WTC11 (cell line): ENCODE measurements at regions of chrX and their contacts with region 1.

Region 1: DNA sequence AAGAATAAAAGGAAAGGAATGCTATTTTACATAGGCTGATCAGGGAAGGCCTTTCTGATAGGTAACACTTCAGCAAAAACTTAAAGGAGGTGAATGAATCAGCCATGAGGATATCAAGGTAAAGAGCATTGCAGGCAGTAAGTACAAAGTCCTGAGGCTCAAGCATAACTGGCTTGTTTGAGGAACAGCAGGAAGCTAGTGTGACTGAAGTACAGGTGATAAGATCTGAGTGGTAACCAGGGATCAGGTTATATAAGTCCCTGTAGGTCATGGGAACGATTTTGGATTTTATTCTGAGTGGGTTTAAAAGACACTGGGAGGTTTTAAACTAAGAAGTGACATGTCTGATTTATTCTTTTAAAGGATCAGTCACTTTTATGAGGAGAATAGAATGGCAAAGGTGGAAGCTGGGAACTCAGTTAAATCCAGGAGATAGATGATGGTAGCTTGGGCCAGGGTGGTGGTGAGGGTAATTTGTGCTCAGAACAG is 47.1 kb upstream of the THOC2 start:
- DNase-seq: no peak
- ATAC-seq: no peak
- H3K4me3 Mint-ChIP-seq: no peak overlapping the region
- H3K27ac Mint-ChIP-seq: no peak overlapping the region
- H3K4me1 Mint-ChIP-seq: peaks cover 9% of the 10 kb centered on the region; the same call in 1 of the 2 replicates
- H3K27me3 Mint-ChIP-seq: no peaks in the 10 kb centered on the region
- CTCF ChIP-seq: no peak

Region 2: DNA sequence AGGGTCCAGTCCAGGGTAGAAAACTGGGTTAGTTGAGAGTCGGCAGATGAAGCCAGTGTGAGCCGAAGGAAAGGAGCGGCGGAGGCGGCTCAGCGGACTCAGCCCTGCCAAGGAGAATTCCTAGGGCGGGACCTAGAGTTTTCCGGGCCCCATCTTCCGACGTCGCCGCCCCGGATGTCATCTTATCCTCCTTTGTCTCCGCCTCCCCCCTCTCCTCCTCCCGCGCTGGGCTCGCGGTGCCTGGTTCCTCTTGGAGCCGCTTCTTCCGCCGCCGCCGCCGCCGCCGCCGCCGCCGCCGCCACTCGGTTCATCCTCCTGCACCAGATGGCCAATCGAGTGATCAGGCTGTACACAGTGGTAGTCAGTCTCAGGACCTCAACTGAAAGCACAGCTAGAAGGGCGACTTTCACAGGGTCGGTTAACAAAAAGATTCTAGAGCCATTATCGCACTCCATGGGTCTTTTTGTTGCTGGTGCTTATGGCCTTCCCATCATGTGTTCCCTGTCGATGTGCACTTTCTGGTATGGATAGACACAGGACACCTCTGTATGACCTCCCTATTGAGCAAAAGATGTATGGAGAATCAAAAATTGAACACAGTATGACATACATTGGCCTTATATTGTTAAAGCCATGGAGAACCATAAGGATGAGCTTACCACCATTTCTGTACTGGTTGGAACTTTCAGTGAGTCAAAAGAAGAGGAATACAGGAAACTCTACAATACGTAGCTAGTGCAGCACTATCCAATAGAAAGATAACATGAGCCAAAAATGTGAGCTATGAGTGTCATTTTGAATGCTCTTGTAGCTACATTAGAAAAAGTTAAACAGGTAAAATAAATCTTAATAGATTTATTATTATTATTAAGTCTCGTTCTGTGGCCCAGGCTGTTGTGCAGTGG is 14.7 kb before region 1 on chrX:
- CTCF ChIA-PET with region 1: interaction called, 10 read pairs
- POLR2A ChIA-PET with region 1: no interaction called
- DNase-seq: peak; percentile 80
- ATAC-seq: peak; percentile 100
- H3K4me3 Mint-ChIP-seq: peak overlapping the region; percentile 68
- H3K27ac Mint-ChIP-seq: peak overlapping the region; percentile 89
- H3K4me1 Mint-ChIP-seq: peaks cover 4% of the 10 kb centered on the region
- H3K27me3 Mint-ChIP-seq: no peaks in the 10 kb centered on the region; the same call in 1 of the 2 replicates
- CTCF ChIP-seq: no peak

Region 3: GRCh38 chrX:123833387-123833786 is 53.4 kb after region 1 on chrX:
- CTCF ChIA-PET with region 1: interaction called, 31 read pairs
- POLR2A ChIA-PET with region 1: interaction called, 3 read pairs
- DNase-seq: peak; percentile 52
- ATAC-seq: peak; percentile 90
- H3K4me3 Mint-ChIP-seq: no peak overlapping the region
- H3K27ac Mint-ChIP-seq: no peak overlapping the region
- H3K4me1 Mint-ChIP-seq: peaks cover 2% of the 10 kb centered on the region; the same call in 1 of the 2 replicates
- H3K27me3 Mint-ChIP-seq: no peaks in the 10 kb centered on the region; the same call in 1 of the 2 replicates
- CTCF ChIP-seq: peak; percentile 68